Activated CD4-positive, alpha-beta T cell treated with anti-CD3 and anti-CD28 coated beads, Interleukin-2, amount 10 ng/mL, durations not matched to agents 24 days and 14 days (primary cell): ENCODE measurements at regions of chr11 and their contacts with region 1.

Region 1: DNA sequence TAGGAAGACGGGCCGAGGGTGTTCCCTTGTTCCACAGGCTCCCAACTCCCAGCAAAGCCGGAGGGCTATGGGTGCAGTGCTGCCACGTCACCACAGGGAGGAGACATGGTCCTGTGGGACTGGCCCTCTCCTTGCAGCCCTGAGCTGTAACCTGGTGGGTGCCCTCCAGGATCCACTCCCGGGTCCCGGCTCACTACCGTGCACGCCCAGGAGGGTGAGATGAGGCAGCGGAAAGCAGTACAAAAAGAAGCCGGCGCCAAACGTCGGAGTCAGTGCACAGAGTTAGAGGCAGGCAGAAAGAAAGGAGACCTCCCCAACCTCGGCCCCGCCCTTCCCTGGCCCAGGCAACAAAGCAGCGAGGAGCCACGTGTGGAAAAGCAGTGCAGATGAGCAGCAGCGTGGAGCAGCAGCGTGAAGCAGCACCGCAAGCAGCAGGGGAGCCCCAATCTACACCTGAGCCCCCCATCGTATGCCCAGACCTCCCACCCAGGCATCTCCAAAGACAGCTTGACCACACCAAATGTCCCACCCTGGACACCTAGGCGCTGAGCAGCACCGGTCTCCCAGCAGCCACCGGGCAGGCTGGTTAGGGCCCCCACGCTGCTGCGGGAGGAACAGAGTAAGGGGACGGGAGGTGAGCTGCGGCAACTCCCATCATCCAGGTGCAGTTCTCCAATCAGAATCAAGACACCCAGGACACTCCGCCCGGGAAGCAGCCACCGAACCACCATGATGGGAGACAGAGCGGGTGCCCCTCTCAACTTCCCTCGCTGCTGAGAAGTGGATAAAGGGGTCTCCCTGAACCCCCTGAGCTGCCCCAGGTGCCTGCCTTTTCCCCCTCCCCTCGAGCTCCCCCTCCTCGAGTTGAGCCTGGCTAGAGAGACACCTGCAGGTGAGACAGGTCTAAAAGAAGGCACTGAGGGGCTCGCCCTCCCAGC is 28.8 kb downstream of the IGSF9B start:
- DNase-seq: peak; percentile 92
- H3K4me3 Mint-ChIP-seq: peak overlapping the region; percentile 89
- H3K27ac Mint-ChIP-seq: peak overlapping the region; percentile 97
- H3K4me1 Mint-ChIP-seq: peaks cover 34% of the 10 kb centered on the region
- H3K27me3 Mint-ChIP-seq: no peaks in the 10 kb centered on the region

Region 2: DNA sequence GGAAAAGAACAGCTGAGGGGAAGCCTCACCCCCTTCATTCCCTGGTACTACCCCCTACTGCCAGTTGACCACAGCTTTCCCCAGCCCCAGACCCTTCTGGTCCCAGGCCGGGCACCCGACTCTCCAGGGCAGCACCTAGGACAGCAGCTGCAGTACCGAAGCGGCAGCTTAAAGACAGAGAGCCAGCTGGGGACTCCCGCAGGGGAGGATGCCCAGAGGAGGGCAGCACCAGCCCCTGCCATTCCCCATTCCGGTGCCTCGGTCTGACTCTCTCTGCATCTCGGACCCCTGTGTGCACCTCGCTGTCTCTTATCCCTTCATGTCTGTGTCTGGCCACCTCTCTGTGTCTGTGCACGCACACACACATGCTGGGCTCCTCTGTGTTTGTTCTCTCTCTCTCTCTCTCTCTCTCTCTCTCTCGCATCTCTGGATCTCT is 19.4 kb after region 1 on chr11:
- intact Hi-C with region 1: loop called (anchors 1 kb)
- DNase-seq: peak; percentile 92
- H3K4me3 Mint-ChIP-seq: peak overlapping the region; percentile 88
- H3K27ac Mint-ChIP-seq: peak overlapping the region; percentile 97
- H3K4me1 Mint-ChIP-seq: peaks cover 75% of the 10 kb centered on the region
- H3K27me3 Mint-ChIP-seq: no peaks in the 10 kb centered on the region

Region 3: GRCh38 chr11:133956650-133957633 is 29.0 kb after region 1 on chr11 and contains the start of gene IGSF9B:
- intact Hi-C with region 1: loop called (anchors 1 kb)
- DNase-seq: peak; percentile 98
- H3K4me3 Mint-ChIP-seq: peak within 1 kb of the TSS; percentile 96
- H3K27ac Mint-ChIP-seq: peak within 1 kb of the TSS; percentile 89
- H3K4me1 Mint-ChIP-seq: peaks cover 50% of the 10 kb centered on the region
- H3K27me3 Mint-ChIP-seq: peaks cover 19% of the 10 kb centered on the region
- total RNA-seq, gene IGSF9B: 90.5 and 91.8 TPM in 2 replicates

Region 4: GRCh38 chr11:134033696-134034491 is 105.9 kb after region 1 on chr11:
- intact Hi-C with region 1: loop called (anchors 1 kb)
- DNase-seq: peak; percentile 92
- H3K4me3 Mint-ChIP-seq: peak overlapping the region; percentile 54
- H3K27ac Mint-ChIP-seq: peak overlapping the region; percentile 73
- H3K4me1 Mint-ChIP-seq: peaks cover 48% of the 10 kb centered on the region
- H3K27me3 Mint-ChIP-seq: peaks cover 7% of the 10 kb centered on the region

Region 5: DNA sequence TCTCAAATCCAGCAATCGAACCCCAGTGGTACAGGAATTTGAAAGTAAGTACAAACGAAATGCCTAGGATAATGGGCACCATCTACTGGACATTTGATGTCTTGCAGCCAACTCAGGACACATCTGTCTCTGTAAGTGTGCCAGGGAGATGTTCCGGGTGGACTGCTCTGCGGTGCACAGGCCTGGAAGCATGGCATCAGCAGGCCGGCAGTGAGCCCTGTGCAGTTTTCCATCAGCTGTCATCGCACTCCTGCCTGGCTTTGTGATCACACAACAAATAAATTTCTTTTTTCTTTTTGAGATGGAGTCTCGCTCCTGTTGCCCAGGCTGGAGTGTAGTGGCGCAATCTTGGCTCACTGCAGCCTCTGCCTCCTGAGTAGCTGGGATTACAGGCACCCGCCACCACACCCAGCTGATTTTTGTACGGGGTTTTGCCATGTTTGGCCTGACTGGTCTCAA is 211.9 kb after region 1 on chr11:
- intact Hi-C with region 1: loop called (anchors 1 kb)
- DNase-seq: peak; percentile 84
- H3K4me3 Mint-ChIP-seq: no peak overlapping the region
- H3K27ac Mint-ChIP-seq: no peak overlapping the region
- H3K4me1 Mint-ChIP-seq: peaks cover 16% of the 10 kb centered on the region
- H3K27me3 Mint-ChIP-seq: no peaks in the 10 kb centered on the region

Region 6: GRCh38 chr11:134275534-134276395 is 347.8 kb after region 1 on chr11 and contains the start of gene GLB1L3:
- intact Hi-C with region 1: loop called (anchors 5 kb)
- DNase-seq: peak; percentile 96
- H3K4me3 Mint-ChIP-seq: peak within 1 kb of the TSS; percentile 98
- H3K27ac Mint-ChIP-seq: peak within 1 kb of the TSS; percentile 93
- H3K4me1 Mint-ChIP-seq: peaks cover 46% of the 10 kb centered on the region
- H3K27me3 Mint-ChIP-seq: peaks cover 3% of the 10 kb centered on the region
- total RNA-seq, gene GLB1L3: 16.5 and 17.0 TPM in 2 replicates